Spleen (tissue), 13 donors: ENCODE measurements at regions of chr1 and their contacts with region 1.

Region 1: DNA sequence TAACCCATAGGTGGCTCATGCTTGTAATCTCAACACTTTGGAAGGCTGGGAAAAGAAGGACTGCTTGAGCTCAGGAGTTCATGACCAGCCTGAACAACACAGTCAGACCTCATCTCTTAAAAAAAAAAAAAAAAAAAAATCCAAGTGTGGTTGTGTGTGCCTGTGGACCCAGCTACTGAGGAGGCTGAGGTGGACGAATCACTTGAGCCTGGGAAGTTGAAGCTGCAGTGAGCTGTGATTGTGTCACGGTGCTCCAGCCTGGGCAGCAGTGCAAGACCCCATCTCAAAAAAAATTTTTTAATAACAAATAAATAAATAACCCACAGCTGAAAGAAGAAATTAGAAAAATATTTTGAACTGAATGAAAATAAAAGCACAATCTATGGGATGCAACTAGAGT is 13.8 kb downstream of the INTS7 start:
- DNase-seq: no peak
- H3K4me3 ChIP-seq: no peak overlapping the region
- H3K27ac ChIP-seq: no peak overlapping the region
- H3K4me1 ChIP-seq: no peaks in the 10 kb centered on the region
- H3K27me3 ChIP-seq: no peaks in the 10 kb centered on the region
- CTCF ChIP-seq: no peak
- POLR2A ChIP-seq: no peak

Region 2: DNA sequence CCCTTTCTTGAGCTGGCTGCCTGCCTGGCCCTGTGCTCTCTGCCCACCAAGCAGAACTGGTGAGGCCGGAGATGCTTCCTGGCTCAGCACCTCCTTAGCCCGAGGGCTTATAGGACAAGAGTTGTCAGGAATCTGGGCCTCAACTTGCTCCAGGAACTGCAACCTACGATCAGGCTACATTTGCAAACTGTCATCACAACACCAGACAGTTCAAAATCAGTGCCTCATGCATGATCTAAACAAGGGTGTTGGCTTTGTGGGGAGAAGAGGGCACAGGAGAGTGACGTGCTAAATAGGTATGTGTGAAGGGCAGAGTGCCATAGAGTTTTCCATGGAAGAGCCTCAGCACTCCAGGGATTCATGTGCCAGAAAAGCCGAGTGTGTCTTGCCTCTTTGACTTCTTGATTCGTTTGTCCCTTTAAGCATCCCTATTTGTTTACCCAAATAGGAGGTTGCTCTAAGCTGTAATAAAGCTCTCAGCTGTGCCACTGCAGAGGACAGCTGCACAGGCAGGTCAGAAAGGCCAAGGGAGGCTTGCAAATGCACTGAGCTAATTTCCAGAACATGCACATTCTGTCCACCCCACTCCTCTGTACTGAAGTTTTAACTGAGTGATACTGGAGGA is 316.0 kb before region 1 on chr1:
- intact Hi-C with region 1: loop called (anchors 10 kb)
- DNase-seq: no peak
- H3K4me3 ChIP-seq: no peak overlapping the region
- H3K27ac ChIP-seq: peak overlapping the region in 2 of 8 donors; percentile 16 to 31
- H3K4me1 ChIP-seq: peaks cover 0 to 21% (median 0%) of the 10 kb centered on the region in 6 donors
- H3K27me3 ChIP-seq: no peaks in the 10 kb centered on the region
- CTCF ChIP-seq: no peak
- POLR2A ChIP-seq: no peak

Region 3: GRCh38 chr1:212981571-212982328 is 960.2 kb after region 1 on chr1:
- intact Hi-C with region 1: no loop called
- DNase-seq: no peak
- H3K4me3 ChIP-seq: no peak overlapping the region
- H3K27ac ChIP-seq: no peak overlapping the region
- H3K4me1 ChIP-seq: no peaks in the 10 kb centered on the region
- H3K27me3 ChIP-seq: no peaks in the 10 kb centered on the region
- CTCF ChIP-seq: no peak
- POLR2A ChIP-seq: no peak